ENCODE measurements at regions of chr10 and their contacts with region 1.

Region 1: DNA sequence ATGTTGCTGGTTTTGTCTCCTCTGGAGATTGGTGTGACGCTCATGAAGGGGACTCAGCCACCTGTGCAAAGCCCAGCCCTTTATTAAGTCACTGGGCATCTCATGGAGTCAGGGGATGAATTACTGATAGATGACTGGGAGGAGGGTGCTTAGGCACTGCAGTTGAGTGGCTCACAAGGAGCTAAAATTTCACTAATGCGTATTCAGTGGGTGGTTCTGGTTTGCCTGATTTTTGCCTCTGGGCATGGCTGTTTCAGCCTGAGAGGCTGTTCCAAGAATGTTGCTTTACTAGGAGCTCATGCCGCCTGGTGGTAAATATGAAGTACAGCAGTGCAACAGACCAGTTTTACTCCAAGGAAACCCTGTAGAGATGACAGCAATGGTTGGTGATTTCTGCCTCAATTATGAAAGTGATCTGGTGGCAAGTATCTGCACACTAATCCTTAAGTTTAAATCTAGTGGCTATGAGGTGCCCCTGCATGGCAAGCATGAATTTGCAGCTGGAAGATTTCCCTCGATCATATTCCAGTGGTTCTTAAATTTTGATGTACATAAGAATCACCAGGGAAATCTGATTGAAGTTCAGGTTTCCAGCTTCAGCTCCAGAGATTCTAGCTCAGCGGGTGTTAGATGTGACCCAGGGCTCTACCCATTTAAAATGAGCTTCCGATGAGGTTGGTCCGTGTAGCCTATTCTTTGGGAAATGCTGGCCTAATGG is 19.9 kb downstream of the ACTA2 start:
- DNase-seq: peak; percentile 83
- H3K4me3 Mint-ChIP-seq: no peak overlapping the region
- H3K27ac Mint-ChIP-seq: no peak overlapping the region
- H3K4me1 Mint-ChIP-seq: peaks cover 25% of the 10 kb centered on the region
- H3K27me3 Mint-ChIP-seq: no peaks in the 10 kb centered on the region

Region 2: GRCh38 chr10:88687853-88688467 is 244.7 kb before region 1 on chr10:
- intact Hi-C with region 1: loop called (anchors 5 kb)
- DNase-seq: no peak
- H3K4me3 Mint-ChIP-seq: no peak overlapping the region
- H3K27ac Mint-ChIP-seq: no peak overlapping the region
- H3K4me1 Mint-ChIP-seq: no peaks in the 10 kb centered on the region
- H3K27me3 Mint-ChIP-seq: peaks cover 27% of the 10 kb centered on the region

Region 3: GRCh38 chr10:88835096-88835909 is 97.4 kb before region 1 on chr10:
- intact Hi-C with region 1: loop called (anchors 1 kb)
- DNase-seq: peak; percentile 96
- H3K4me3 Mint-ChIP-seq: no peak overlapping the region
- H3K27ac Mint-ChIP-seq: no peak overlapping the region
- H3K4me1 Mint-ChIP-seq: peaks cover 31% of the 10 kb centered on the region
- H3K27me3 Mint-ChIP-seq: no peaks in the 10 kb centered on the region

Region 4: DNA sequence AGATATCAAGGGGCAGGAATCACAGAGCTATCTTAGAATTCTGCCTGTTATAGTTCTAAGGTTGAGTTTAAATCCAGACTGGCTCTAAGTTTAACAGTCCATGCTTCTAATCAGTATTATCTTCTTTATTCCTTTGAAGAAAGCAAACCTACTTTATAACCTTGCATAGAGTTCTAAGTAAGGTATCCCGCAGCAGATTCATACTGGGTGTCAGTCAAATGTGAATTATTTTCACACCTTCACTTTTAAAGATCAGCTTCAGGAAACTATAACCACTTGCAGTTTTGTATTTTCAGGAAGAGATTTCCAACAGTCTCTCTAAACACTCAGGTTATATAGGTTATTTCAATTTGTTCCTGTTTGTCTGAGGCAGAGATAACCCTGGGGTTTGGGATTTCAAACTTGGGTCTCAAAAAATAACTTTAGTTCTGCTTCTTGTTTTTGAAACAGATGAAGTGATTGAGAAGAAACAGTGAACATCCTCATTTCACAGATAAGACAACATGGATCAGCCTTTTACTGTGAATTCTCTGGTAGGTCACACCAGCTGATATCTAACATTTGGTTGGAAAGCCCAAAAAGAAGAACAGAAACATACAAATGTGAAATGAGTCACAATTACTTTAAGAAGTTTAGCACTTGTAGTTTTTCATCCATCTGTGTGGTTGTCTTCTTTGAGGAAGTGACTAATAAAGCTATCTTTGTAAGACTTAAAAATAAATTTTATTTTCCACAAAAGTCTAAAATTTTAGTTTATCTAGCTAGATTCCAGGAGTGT is 31.3 kb before region 1 on chr10:
- intact Hi-C with region 1: loop called (anchors 1 kb)
- DNase-seq: no peak
- H3K4me3 Mint-ChIP-seq: peak overlapping the region; percentile 71
- H3K27ac Mint-ChIP-seq: peak overlapping the region; percentile 93
- H3K4me1 Mint-ChIP-seq: peaks cover 47% of the 10 kb centered on the region
- H3K27me3 Mint-ChIP-seq: no peaks in the 10 kb centered on the region

Region 5: DNA sequence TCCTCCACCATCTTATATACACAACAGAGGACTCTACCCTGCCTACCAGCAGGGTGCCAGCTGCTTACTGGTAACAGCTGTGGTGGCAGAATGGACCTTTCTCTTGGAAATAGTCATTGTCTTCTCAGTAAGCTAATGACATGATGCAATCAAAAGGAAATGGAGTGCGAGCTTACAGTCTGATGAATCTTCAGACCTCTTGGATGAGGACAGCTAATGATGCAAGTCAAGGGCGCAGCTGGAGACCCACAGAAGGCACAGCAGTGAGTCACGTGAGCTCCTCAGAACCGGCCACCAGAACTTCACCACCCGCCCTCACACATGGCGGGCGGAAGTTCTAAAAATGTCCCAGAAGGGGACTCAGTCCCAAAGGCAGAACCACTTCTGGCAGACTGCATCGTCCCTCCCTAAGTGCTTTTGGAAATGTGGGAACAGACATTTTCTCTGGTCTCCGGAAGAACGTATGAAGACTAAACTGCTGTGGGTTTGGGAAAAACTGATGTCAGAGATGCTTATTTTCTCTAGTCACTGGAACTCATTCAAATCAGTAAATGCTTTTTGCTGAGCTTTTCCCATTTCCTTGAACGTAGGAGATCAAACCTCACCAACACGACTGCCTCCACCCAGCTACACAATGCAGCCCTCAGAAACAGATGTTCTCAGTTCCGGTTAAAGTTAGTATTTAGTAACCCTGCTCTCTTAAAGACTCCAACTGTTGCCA is 154.3 kb after region 1 on chr10:
- intact Hi-C with region 1: loop called (anchors 2 kb)
- DNase-seq: peak; percentile 53
- H3K4me3 Mint-ChIP-seq: no peak overlapping the region
- H3K27ac Mint-ChIP-seq: no peak overlapping the region
- H3K4me1 Mint-ChIP-seq: peaks cover 9% of the 10 kb centered on the region
- H3K27me3 Mint-ChIP-seq: peaks cover 8% of the 10 kb centered on the region

Region 6: DNA sequence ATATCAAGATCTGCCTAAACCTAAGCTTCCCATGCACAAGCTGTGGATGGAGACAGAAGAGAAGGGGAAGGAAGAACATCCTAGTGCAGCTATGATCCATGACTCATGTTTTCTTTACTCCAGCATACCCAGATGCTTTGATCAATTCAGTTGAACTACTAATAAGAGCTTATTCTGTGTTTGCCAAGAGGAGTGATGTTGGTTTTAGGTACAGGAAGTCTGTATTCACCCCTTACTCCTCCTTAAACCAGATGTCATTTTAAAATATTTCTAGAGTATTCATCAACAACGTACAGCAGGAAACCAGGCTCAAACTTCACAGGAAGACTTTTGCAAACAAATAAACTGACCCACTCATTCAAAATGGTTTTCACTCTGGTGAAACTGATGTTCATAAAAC is 683.1 kb after region 1 on chr10:
- intact Hi-C with region 1: no loop called
- DNase-seq: no peak
- H3K4me3 Mint-ChIP-seq: peak overlapping the region; percentile 3
- H3K27ac Mint-ChIP-seq: no peak overlapping the region
- H3K4me1 Mint-ChIP-seq: peaks cover 16% of the 10 kb centered on the region
- H3K27me3 Mint-ChIP-seq: peaks cover 2% of the 10 kb centered on the region